Adrenal gland (tissue), 19 donors: ENCODE measurements at regions of chr2 and their contacts with region 1.

Region 1: DNA sequence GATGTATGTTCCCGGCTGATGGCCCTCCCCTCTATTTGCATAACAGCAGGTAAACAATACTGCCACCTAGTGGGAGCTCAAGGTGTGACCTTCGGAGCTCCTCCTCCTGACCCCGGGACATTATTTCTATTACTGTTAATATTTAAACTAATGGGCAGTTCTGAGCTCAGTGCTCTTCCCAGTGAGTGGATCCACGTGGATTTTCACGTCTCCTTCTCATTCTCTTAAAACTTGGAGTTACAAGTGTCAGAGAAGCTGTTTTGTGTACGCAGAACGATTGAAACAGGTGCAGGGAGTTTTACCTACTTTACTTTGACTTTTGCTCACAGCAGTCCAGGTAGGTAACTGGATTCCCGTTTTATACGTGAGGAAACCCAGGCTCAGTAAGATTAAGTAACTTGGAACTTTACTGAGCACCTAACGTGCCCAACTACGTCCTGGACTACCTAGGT is 127.3 kb downstream of the PRKCE start:
- DNase-seq: peak; percentile 68 to 88 (median 79)
- H3K4me3 ChIP-seq: no peak overlapping the region
- H3K27ac ChIP-seq: no peak overlapping the region
- H3K4me1 ChIP-seq: no peaks in the 10 kb centered on the region
- H3K27me3 ChIP-seq: no peaks in the 10 kb centered on the region
- CTCF ChIP-seq: peak; percentile 66 to 84 (median 79)
- POLR2A ChIP-seq: no peak

Region 2: GRCh38 chr2:45643543-45644542 is 134.9 kb before region 1 on chr2:
- intact Hi-C with region 1: loop called (anchors 2 to 5 kb)
- DNase-seq: peak; percentile 48 to 77 (median 67)
- H3K4me3 ChIP-seq: peak overlapping the region; percentile 51 to 71 (median 60)
- H3K27ac ChIP-seq: peak overlapping the region in 1 of 5 donors; percentile 43
- H3K4me1 ChIP-seq: peaks cover 0 to 13% of the 10 kb centered on the region in 2 donors
- H3K27me3 ChIP-seq: no peaks in the 10 kb centered on the region
- CTCF ChIP-seq: peak; percentile 77 to 99 (median 94)
- POLR2A ChIP-seq: no peak